ENCODE measurements at regions of chr7 and their contacts with region 1.

Region 1: DNA sequence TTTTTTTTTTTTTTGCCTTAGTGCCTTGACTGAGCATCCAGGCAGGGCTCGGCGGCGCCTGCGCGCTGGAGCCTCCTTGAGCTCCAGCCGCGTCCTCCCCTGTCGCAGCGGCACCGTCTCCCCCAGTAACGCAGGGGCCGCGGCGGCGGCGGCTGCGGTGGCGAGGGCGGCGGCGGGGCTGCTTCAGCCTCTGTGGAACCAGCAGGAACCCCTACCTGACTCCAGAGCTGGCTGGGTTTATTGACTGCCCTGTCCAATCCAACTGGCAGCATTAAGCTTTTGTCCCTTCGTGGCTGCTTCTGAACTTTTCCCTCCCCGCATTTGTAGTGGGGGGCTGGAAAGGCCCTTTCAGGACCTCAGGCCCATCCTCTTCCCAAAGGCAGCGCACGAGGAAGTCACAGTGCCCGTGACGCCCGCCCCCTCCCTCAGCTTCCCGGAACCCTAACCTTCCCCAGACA is at the start of gene GPR85:
- DNase-seq: peak; percentile 73
- ATAC-seq: peak; percentile 90
- H3K4me3 ChIP-seq: peak within 1 kb of the TSS; percentile 97
- H3K27ac ChIP-seq: peak within 1 kb of the TSS; percentile 84
- H3K4me1 ChIP-seq: 0 out of 2 replicates have a peak, but pooled peaks cover 3% of the 10 kb centered on the region
- H3K27me3 ChIP-seq: no peaks in the 10 kb centered on the region
- CTCF ChIP-seq: no peak
- POLR2A ChIP-seq: no peak
- RAD21 ChIP-seq: no peak
- total RNA-seq, gene GPR85: 5.0 and 5.4 TPM in 2 replicates

Region 2: GRCh38 chr7:112939574-112940314 is 146.7 kb before region 1 on chr7:
- CTCF ChIA-PET with region 1: no interaction called
- POLR2A ChIA-PET with region 1: no interaction called
- dilution Hi-C with region 1: no loop called
- in situ Hi-C with region 1: no loop called
- intact Hi-C with region 1: loop called (anchors 5 kb)
- DNase-seq: peak; percentile 99
- ATAC-seq: peak; percentile 97
- H3K4me3 ChIP-seq: peak overlapping the region; percentile 70
- H3K27ac ChIP-seq: peak overlapping the region; percentile 88
- H3K4me1 ChIP-seq: peaks cover 3% of the 10 kb centered on the region; the same call in 1 of the 2 replicates
- H3K27me3 ChIP-seq: no peaks in the 10 kb centered on the region
- CTCF ChIP-seq: no peak
- POLR2A ChIP-seq: no peak
- RAD21 ChIP-seq: no peak

Measured in IMR-90 (cell line).